MCF 10A (cell line): ENCODE measurements at regions of chr5 and their contacts with region 1.

Region 1: GRCh38 chr5:142548739-142549275 is 137.1 kb downstream of the FGF1 start:
- DNase-seq: peak; percentile 97
- H3K4me3 Mint-ChIP-seq: no peak overlapping the region
- H3K27ac Mint-ChIP-seq: no peak overlapping the region
- H3K4me1 Mint-ChIP-seq: peaks cover 26% of the 10 kb centered on the region
- H3K27me3 Mint-ChIP-seq: no peaks in the 10 kb centered on the region
- CTCF ChIP-seq: peak; percentile 99

Region 2: GRCh38 chr5:141960449-141961202 is 588.2 kb before region 1 on chr5:
- CTCF ChIA-PET with region 1: no interaction called
- POLR2A ChIA-PET with region 1: no interaction called
- intact Hi-C with region 1: no loop called
- DNase-seq: peak; percentile 96
- H3K4me3 Mint-ChIP-seq: no peak overlapping the region
- H3K27ac Mint-ChIP-seq: peak overlapping the region; percentile 68
- H3K4me1 Mint-ChIP-seq: peaks cover 19% of the 10 kb centered on the region
- H3K27me3 Mint-ChIP-seq: no peaks in the 10 kb centered on the region
- CTCF ChIP-seq: peak; percentile 87

Region 3: GRCh38 chr5:141992349-141992963 is 556.4 kb before region 1 on chr5:
- CTCF ChIA-PET with region 1: interaction called, 5 read pairs
- POLR2A ChIA-PET with region 1: no interaction called
- intact Hi-C with region 1: loop called (anchors 5 kb)
- DNase-seq: peak; percentile 88
- H3K4me3 Mint-ChIP-seq: no peak overlapping the region
- H3K27ac Mint-ChIP-seq: no peak overlapping the region
- H3K4me1 Mint-ChIP-seq: no peaks in the 10 kb centered on the region
- H3K27me3 Mint-ChIP-seq: no peaks in the 10 kb centered on the region
- CTCF ChIP-seq: peak; percentile 82

Region 4: GRCh38 chr5:142151436-142152383 is 397.1 kb before region 1 on chr5:
- CTCF ChIA-PET with region 1: interaction called, 158 read pairs
- POLR2A ChIA-PET with region 1: interaction called, 4 read pairs
- intact Hi-C with region 1: loop called (anchors 1 kb)
- DNase-seq: peak; percentile 85
- H3K4me3 Mint-ChIP-seq: no peak overlapping the region
- H3K27ac Mint-ChIP-seq: no peak overlapping the region
- H3K4me1 Mint-ChIP-seq: no peaks in the 10 kb centered on the region
- H3K27me3 Mint-ChIP-seq: no peaks in the 10 kb centered on the region
- CTCF ChIP-seq: peak; percentile 89

Region 5: GRCh38 chr5:142215915-142216681 is 332.7 kb before region 1 on chr5:
- CTCF ChIA-PET with region 1: interaction called, 4 read pairs
- POLR2A ChIA-PET with region 1: interaction called, 3 read pairs
- intact Hi-C with region 1: loop called (anchors 2 kb)
- DNase-seq: peak; percentile 99
- H3K4me3 Mint-ChIP-seq: peak overlapping the region; percentile 72
- H3K27ac Mint-ChIP-seq: peak overlapping the region; percentile 35
- H3K4me1 Mint-ChIP-seq: peaks cover 12% of the 10 kb centered on the region
- H3K27me3 Mint-ChIP-seq: peaks cover 2% of the 10 kb centered on the region
- CTCF ChIP-seq: no peak

Region 6: DNA sequence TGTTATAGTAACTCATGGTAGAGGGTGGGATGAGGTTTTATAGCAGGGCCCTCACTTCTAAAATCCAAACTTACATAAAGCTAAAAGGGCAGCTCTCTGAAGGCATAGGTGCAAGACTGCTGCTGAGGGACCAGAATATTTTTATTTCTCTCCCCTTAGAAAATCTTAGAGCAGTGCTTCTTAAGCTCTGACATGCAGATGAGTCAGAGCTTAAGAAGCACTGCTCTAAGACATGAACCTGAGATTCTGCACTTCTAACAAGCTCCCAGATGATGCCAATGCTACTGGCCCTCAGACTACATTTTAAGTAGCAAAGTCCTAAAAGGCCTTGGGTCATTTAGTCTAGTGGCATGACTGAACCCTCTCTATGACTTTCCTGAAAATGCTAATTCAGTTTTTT is 126.4 kb before region 1 on chr5:
- CTCF ChIA-PET with region 1: interaction called, 4 read pairs
- POLR2A ChIA-PET with region 1: no interaction called
- intact Hi-C with region 1: loop called (anchors 1 kb)
- DNase-seq: peak; percentile 50
- H3K4me3 Mint-ChIP-seq: no peak overlapping the region
- H3K27ac Mint-ChIP-seq: no peak overlapping the region
- H3K4me1 Mint-ChIP-seq: peaks cover 8% of the 10 kb centered on the region
- H3K27me3 Mint-ChIP-seq: no peaks in the 10 kb centered on the region
- CTCF ChIP-seq: no peak

Region 7: DNA sequence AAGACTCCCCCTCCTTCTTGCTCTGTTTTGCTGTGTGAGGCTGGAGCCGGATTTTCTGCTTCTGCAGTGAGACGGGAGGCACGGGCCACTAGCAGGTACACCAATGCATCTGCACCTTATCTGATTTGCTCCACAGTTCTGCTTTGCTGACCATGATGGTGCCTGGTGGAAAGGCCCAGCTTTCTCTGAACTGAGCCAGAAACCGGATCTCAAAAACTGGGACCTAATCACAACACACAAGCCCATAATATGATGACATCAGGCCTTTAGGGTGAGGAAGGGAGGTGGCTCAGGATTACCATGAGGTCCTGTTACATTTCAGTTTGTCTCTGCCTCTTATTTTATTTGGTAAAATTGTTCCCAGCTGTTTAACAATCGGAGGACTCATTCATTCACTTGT is 87.3 kb after region 1 on chr5:
- CTCF ChIA-PET with region 1: no interaction called
- POLR2A ChIA-PET with region 1: no interaction called
- intact Hi-C with region 1: no loop called
- DNase-seq: no peak
- H3K4me3 Mint-ChIP-seq: no peak overlapping the region
- H3K27ac Mint-ChIP-seq: no peak overlapping the region
- H3K4me1 Mint-ChIP-seq: no peaks in the 10 kb centered on the region
- H3K27me3 Mint-ChIP-seq: no peaks in the 10 kb centered on the region
- CTCF ChIP-seq: no peak

Region 8: GRCh38 chr5:142699184-142699720 is 150.4 kb after region 1 on chr5:
- CTCF ChIA-PET with region 1: interaction called, 5 read pairs
- POLR2A ChIA-PET with region 1: no interaction called
- intact Hi-C with region 1: loop called (anchors 1 kb)
- DNase-seq: peak; percentile 93
- H3K4me3 Mint-ChIP-seq: no peak overlapping the region
- H3K27ac Mint-ChIP-seq: no peak overlapping the region
- H3K4me1 Mint-ChIP-seq: peaks cover 14% of the 10 kb centered on the region
- H3K27me3 Mint-ChIP-seq: no peaks in the 10 kb centered on the region
- CTCF ChIP-seq: peak; percentile 100